A549 (cell line): ENCODE measurements at regions of chr15 and their contacts with region 1.

Region 1: DNA sequence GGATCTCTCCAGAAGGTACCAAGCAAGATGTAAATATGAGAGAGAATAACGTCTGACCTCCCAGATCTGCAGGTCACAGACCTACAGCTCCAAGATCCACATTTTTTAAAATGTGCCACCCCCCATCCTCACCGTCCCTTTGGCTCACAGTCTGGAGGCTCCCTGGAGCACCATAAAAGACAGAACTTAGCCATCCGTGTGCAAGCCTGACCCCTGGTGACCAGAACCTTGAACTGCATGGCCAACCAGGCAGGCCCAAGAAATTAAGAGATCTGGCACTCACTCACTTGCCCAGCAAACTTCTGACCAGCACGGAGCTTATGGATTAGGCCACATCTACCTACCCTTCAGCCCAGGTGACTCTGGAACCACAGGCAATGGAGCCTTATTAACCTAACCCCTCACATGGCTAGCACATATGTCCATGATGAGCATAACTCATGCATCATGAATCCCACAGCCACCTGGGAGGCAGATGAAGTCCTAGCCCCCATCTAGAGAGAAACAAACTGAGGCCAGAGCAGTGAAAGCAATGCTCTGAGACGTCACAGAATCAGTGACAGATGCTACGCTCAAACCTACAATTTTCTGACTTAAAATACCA is 275.3 kb downstream of the UACA start:
- DNase-seq: peak; percentile 80 to 88
- ATAC-seq: peak; percentile 45 to 67; a peak in 4 of 6 replicates
- H3K4me3 ChIP-seq: no peak overlapping the region
- H3K27ac ChIP-seq: peak overlapping the region; percentile 30 to 93; a peak in 4 of 6 replicates
- H3K4me1 ChIP-seq: peaks cover 32% of the 10 kb centered on the region
- CTCF ChIP-seq: peak; percentile 95
- EP300 ChIP-seq: no peak
- POLR2A ChIP-seq: no peak
- RAD21 ChIP-seq: peak; percentile 98 to 99

Region 2: DNA sequence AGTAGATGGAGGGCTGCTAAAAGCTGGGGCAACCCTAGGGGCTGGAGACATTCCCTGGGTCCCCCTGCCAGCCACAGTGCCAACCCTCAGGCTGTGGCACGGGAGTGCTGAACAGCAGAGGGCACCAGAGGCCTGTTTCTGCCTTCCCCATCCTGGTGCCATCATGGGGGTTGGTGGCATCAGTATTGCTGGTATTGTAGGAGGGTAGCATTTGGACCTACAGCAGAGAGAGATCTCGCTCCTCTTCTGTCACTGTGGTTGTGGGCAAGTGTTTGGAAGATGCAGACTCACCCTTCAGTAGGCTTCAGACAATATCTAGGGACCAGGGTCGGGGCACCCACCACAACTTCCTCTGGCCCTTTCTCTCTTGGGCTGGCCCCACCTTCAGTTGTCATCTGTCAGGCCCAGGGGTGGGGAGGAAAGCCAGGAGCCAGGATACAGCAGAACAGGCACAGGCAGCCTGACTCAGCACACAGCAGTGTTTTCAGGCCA is 912.0 kb before region 1 on chr15:
- CTCF ChIA-PET with region 1: interaction called, 28 read pairs
- POLR2A ChIA-PET with region 1: no interaction called
- DNase-seq: peak; percentile 68 to 87
- ATAC-seq: peak; percentile 79 to 92
- H3K4me3 ChIP-seq: no peak overlapping the region
- H3K27ac ChIP-seq: peak overlapping the region; percentile 28 to 50; a peak in 4 of 6 replicates
- H3K4me1 ChIP-seq: peaks cover 37% of the 10 kb centered on the region; the same call in 2 of the 3 replicates
- CTCF ChIP-seq: peak; percentile 94
- EP300 ChIP-seq: no peak
- POLR2A ChIP-seq: no peak
- RAD21 ChIP-seq: peak; percentile 98

Region 3: DNA sequence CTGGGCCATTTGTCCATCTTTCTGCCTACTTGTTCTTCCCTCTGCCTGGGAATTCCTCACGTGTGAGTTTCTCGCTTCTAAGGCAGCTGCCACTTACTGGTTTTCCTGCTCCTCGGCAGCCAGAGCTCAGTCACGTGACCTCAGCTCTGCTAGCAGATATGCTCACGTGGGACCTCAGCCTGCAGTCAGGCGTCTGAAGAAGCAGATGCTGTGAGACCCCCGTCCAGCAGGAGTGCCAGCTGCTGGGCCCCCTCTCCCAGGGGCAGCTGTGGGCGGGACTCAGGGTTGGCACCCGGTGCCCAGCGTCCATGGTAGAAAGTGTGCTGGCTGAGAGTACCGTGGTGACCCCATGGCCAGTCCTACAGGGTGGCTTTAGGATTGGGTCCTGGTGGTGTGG is 229.1 kb before region 1 on chr15:
- CTCF ChIA-PET with region 1: interaction called, 23 read pairs
- POLR2A ChIA-PET with region 1: no interaction called
- DNase-seq: no peak
- ATAC-seq: no peak
- H3K4me3 ChIP-seq: no peak overlapping the region
- H3K27ac ChIP-seq: no peak overlapping the region
- H3K4me1 ChIP-seq: no peaks in the 10 kb centered on the region
- CTCF ChIP-seq: no peak
- EP300 ChIP-seq: no peak
- POLR2A ChIP-seq: no peak
- RAD21 ChIP-seq: no peak

Region 4: DNA sequence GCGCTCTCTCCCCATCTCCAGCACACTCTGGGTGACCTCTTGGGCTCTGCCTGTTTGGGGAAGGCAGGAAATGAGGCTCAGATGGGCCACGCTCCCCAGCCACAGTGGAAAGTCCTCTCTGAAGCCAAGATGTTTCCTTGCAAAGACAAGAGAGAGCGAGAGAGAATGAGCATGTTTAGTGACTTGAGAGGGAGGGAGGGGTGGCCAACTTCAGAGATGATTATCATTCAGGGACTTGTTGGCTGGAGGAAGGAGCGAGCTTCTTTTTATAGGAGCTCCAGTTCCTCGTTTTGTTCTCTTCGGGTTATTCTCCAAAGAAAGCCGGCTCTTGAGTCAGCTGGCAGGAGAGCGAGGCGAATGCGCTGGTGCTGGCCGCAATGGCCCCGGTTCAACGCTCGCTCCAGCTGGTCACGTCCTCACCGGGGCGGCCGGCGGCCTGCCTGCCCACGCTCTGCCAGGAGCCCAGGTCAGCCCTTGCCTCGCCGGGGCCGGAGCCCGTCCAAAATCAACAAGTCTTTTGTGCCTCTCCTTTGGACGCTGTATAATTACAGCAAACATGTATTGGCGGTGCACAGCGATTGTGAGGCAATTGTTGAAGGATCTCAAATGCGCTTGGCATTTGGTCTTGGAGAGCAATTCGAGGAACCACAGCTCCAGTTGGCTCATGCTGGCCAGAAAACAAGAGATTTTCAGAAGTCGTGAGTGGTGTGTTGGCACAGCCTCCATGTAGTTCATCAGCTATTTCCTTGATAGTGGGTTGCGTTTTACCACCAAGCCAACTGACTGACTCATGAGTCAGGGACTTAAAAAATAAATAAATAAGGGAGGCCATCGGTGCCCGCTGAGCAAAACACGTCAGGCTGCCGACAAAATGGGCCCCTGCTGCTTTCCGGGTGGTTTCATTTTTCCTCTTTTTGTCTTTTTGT is 13.4 kb before region 1 on chr15:
- CTCF ChIA-PET with region 1: interaction called, 147 read pairs
- POLR2A ChIA-PET with region 1: no interaction called
- DNase-seq: peak; percentile 90 to 96
- ATAC-seq: peak; percentile 76 to 91
- H3K4me3 ChIP-seq: peak overlapping the region; percentile 8; the same call in 1 of the 3 replicates
- H3K27ac ChIP-seq: peak overlapping the region; percentile 71 to 89
- H3K4me1 ChIP-seq: peaks cover 48% of the 10 kb centered on the region
- CTCF ChIP-seq: no peak
- EP300 ChIP-seq: peak; percentile 67 to 93; a peak in 3 of 5 replicates
- POLR2A ChIP-seq: no peak
- RAD21 ChIP-seq: peak; percentile 25 to 54; a peak in 4 of 5 replicates

Region 5: GRCh38 chr15:70563561-70564095 is 75.5 kb after region 1 on chr15:
- CTCF ChIA-PET with region 1: interaction called, 11 read pairs
- POLR2A ChIA-PET with region 1: no interaction called
- DNase-seq: no peak
- ATAC-seq: peak; percentile 37 to 60; a peak in 3 of 6 replicates
- H3K4me3 ChIP-seq: no peak overlapping the region
- H3K27ac ChIP-seq: no peak overlapping the region
- H3K4me1 ChIP-seq: peaks cover 1% of the 10 kb centered on the region; the same call in 2 of the 3 replicates
- CTCF ChIP-seq: no peak
- EP300 ChIP-seq: no peak
- POLR2A ChIP-seq: no peak
- RAD21 ChIP-seq: no peak

Region 6: DNA sequence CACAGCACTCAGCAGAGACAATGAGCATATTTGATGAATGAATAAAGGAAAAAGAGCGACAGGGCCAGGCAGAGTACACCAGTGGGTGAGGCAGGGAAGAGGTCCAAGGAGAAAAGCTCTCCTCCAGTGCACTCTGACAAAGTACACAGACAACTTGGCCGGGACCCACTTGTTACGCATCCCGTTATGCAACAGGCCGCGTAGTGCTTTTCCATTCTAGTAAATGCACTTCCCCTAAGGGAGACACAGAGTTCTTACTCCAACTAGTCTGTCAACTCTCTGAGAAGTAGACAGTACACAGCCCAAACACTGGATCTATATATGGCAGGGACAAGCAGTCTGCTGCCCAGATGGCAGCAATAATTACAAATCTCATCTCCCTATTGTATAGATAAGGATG is 347.3 kb after region 1 on chr15:
- CTCF ChIA-PET with region 1: no interaction called
- POLR2A ChIA-PET with region 1: no interaction called
- DNase-seq: no peak
- ATAC-seq: no peak
- H3K4me3 ChIP-seq: no peak overlapping the region
- H3K27ac ChIP-seq: no peak overlapping the region
- H3K4me1 ChIP-seq: peaks cover 37% of the 10 kb centered on the region
- CTCF ChIP-seq: no peak
- EP300 ChIP-seq: no peak
- POLR2A ChIP-seq: no peak
- RAD21 ChIP-seq: no peak